Activated CD8-positive, alpha-beta T cell treated with anti-CD3 and anti-CD28 coated beads, Interleukin-2, amount 10 ng/mL, durations not matched to agents 7 days and 5 days (primary cell): ENCODE measurements at regions of chr19 and their contacts with region 1.

Region 1: GRCh38 chr19:41449079-41449864 is 6.3 kb downstream of the ERICH4 start:
- DNase-seq: peak; percentile 78
- ATAC-seq: peak; percentile 88
- H3K4me3 Mint-ChIP-seq: peak overlapping the region; percentile 51
- H3K27ac Mint-ChIP-seq: no peak overlapping the region
- H3K4me1 Mint-ChIP-seq: peaks cover 25% of the 10 kb centered on the region
- H3K27me3 Mint-ChIP-seq: peaks cover 23% of the 10 kb centered on the region

Region 2: DNA sequence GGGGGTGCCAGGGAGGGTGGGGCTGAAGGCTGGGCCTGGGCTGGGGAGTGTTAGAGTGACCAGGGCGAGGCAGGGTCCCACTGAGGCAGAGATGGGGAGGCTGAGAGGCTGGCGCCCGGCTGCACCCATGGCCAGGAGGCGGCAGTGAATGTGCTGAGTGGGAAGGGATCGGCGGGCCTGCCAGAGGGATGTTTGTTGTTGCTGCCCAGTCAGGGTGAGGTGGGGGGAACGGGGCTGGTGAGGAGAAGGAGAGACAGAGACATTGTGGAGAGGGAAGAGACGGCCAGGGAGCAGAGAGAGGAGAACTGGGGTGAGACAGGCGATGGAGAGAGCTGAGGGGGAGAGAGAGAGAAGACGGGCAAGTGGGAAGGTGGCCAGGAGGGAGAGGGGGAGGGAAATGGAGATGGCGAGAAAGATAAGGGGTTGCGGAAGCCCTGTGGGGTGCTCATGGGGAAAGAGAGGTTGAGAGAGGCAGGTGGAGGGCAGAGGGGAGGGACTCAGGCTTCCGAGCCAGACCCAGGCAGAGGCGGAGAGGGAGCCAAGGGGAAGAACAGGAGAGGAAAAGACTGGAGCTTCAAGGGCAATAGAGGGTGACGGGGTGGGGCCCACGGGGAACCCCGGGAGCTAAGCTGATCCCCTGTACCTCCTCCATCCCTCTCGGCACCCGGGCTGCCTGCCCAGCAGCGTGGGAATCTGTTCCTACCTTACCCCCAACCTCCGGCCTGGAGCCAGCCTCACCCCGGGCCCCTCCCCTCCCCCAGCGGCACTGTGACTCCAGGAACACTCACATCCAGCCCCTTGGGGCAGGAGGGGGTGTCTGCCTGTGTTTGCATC is 21.4 kb before region 1 on chr19:
- CTCF ChIA-PET with region 1: interaction called, 14 read pairs
- POLR2A ChIA-PET with region 1: no interaction called
- DNase-seq: peak; percentile 59
- ATAC-seq: peak; percentile 71
- H3K4me3 Mint-ChIP-seq: peak overlapping the region; percentile 77
- H3K27ac Mint-ChIP-seq: peak overlapping the region; percentile 84
- H3K4me1 Mint-ChIP-seq: peaks cover 53% of the 10 kb centered on the region
- H3K27me3 Mint-ChIP-seq: no peaks in the 10 kb centered on the region

Region 3: DNA sequence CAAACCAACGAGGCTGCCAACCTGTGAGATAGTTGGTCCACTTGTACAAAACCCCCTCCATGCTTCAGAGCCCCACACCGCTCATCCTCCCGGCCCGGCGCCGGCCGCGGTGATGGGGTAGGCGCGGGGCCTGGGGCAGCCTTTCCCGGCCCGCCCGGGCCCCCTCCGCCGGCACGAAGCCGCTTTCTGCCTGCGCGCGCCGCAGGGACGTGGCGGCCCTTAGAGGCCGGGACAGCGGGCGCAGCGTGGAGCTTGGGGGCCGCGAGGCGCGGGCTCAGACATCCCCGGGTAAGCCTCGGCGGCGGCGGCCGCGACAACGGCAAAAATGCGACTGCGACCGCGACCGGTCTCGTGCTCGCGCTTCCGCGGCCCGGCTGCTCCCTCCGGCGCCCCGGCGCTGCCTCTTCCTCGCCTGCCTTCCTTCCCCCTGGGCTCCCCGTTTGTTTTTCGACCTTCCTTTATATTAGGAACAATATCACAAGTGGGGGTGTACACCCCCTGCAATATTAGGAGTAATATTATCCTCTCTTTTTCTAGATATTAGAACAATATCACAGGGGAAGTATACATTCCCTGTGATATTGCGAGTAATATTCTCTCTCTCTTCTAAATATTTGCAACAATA is 72.8 kb after region 1 on chr19:
- CTCF ChIA-PET with region 1: interaction called, 11 read pairs
- POLR2A ChIA-PET with region 1: no interaction called
- DNase-seq: peak; percentile 64
- ATAC-seq: peak; percentile 87
- H3K4me3 Mint-ChIP-seq: peak overlapping the region; percentile 73
- H3K27ac Mint-ChIP-seq: peak overlapping the region; percentile 43
- H3K4me1 Mint-ChIP-seq: peaks cover 18% of the 10 kb centered on the region
- H3K27me3 Mint-ChIP-seq: peaks cover 43% of the 10 kb centered on the region

Region 4: GRCh38 chr19:41531438-41532311 is 82.4 kb after region 1 on chr19:
- CTCF ChIA-PET with region 1: interaction called, 111 read pairs
- POLR2A ChIA-PET with region 1: interaction called, 3 read pairs
- DNase-seq: peak; percentile 88
- ATAC-seq: peak; percentile 75
- H3K4me3 Mint-ChIP-seq: peak overlapping the region; percentile 73
- H3K27ac Mint-ChIP-seq: peak overlapping the region; percentile 80
- H3K4me1 Mint-ChIP-seq: peaks cover 69% of the 10 kb centered on the region
- H3K27me3 Mint-ChIP-seq: peaks cover 26% of the 10 kb centered on the region

Region 5: DNA sequence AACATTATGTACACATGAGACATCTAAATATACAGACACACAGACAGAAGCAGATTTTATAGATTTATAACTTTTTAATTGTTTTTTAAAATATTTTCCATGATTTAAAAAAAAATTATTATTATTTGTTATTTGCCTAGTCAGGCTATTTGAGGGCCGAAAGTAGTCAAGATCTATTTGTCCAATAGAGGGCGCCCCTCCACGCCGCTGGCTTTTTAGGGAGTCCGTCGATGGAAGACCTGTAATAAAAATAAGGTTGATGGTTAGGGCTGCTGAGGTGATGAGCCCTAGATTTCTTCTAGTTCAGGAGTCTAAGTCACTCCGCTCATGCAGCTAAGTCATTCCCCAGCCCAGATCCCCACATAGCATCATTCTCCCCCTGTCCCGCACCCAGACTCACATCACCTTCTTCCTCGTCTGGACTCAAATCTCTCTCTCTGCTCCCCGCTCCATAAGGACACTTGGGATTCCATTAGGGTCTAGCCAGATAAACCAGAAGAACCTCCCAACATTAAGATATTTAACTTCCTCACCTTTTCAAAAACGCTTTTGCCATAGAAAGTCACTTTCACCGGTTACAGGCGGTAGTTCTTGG is 92.8 kb after region 1 on chr19:
- CTCF ChIA-PET with region 1: interaction called, 111 read pairs
- POLR2A ChIA-PET with region 1: no interaction called
- DNase-seq: peak; percentile 81
- ATAC-seq: no peak
- H3K4me3 Mint-ChIP-seq: no peak overlapping the region
- H3K27ac Mint-ChIP-seq: no peak overlapping the region
- H3K4me1 Mint-ChIP-seq: peaks cover 45% of the 10 kb centered on the region
- H3K27me3 Mint-ChIP-seq: no peaks in the 10 kb centered on the region

Region 6: GRCh38 chr19:41548954-41549688 is 99.8 kb after region 1 on chr19:
- CTCF ChIA-PET with region 1: interaction called, 18 read pairs
- POLR2A ChIA-PET with region 1: no interaction called
- DNase-seq: peak; percentile 85
- ATAC-seq: peak; percentile 74
- H3K4me3 Mint-ChIP-seq: peak overlapping the region; percentile 86
- H3K27ac Mint-ChIP-seq: peak overlapping the region; percentile 87
- H3K4me1 Mint-ChIP-seq: peaks cover 47% of the 10 kb centered on the region
- H3K27me3 Mint-ChIP-seq: no peaks in the 10 kb centered on the region

Region 7: GRCh38 chr19:41597600-41598041 is 148.3 kb after region 1 on chr19:
- CTCF ChIA-PET with region 1: interaction called, 61 read pairs
- POLR2A ChIA-PET with region 1: no interaction called
- DNase-seq: peak; percentile 84
- ATAC-seq: peak; percentile 84
- H3K4me3 Mint-ChIP-seq: no peak overlapping the region
- H3K27ac Mint-ChIP-seq: no peak overlapping the region
- H3K4me1 Mint-ChIP-seq: peaks cover 7% of the 10 kb centered on the region
- H3K27me3 Mint-ChIP-seq: peaks cover 27% of the 10 kb centered on the region